ENCODE measurements at regions of chr6 and their contacts with region 1.

Region 1: DNA sequence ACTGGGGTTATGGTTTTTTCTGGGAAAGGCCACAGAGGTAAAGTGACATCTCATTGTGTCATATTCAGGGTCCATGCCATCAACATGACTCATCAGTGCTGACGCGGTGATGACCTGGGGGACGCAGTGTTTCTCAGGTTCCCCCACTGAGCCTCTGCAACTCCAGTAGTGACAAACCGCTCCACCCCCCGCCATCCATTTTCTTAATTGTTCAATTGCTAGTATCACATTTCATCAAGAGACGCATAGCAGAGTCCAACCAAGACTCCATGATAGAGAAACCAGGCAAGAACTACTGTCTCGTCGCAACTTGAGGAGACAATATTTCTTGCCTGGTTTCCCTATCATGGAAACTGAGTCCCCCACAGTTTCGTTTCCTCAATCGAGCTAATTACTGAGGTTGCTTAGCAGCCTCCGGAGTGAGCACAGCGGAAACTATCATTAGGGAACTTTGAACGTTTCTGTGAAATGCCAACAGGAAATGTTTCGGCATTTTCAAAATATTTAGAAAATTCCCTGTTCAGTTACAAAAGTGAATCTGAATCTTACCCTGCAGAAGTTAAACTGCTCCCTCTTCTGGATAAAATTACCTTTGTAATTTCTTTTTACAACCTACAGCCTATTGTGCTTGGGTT is 12.2 kb upstream of the SERPINB1 start:
- DNase-seq: peak; percentile 87
- ATAC-seq: peak; percentile 57
- H3K4me3 Mint-ChIP-seq: peak overlapping the region; percentile 55
- H3K27ac Mint-ChIP-seq: peak overlapping the region; percentile 91
- H3K4me1 Mint-ChIP-seq: peaks cover 76% of the 10 kb centered on the region
- H3K27me3 Mint-ChIP-seq: no peaks in the 10 kb centered on the region

Region 2: DNA sequence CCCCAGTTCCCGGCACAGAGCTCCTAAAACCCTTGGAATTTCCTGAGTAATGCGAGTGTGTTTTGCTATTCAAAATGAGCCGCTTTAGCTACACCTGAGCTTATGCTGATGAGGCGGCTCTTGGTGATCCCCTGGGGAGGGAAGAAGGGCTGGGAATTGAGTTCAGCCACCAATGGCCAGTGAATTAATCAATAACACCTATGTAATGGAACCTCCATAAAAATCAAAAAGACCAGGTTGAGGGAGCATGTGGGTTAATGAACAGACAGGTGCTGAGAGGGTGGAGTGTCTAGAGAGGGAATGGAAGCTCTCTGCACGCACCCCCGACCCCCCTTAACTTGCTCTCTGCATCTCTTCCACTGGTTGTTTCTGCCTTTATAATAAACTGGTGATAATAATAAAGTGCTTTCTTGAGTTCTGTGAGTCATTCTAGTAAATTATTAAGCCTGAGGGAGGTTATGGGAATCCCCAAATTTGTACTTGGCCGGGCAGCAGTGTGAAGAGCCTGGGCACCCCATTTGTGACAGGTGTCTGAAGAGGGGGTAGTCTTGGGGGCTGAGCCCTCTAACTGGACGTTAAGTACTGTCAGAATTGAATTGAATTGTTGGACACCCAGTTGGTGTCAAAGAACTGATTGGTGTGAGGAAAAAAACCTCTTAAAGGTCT is 12.4 kb after region 1 on chr6:
- CTCF ChIA-PET with region 1: interaction called, 13 read pairs
- POLR2A ChIA-PET with region 1: interaction called, 31 read pairs
- DNase-seq: no peak
- ATAC-seq: no peak
- H3K4me3 Mint-ChIP-seq: no peak overlapping the region
- H3K27ac Mint-ChIP-seq: no peak overlapping the region
- H3K4me1 Mint-ChIP-seq: peaks cover 60% of the 10 kb centered on the region
- H3K27me3 Mint-ChIP-seq: no peaks in the 10 kb centered on the region

Region 3: GRCh38 chr6:2876210-2877056 is 22.6 kb after region 1 on chr6:
- CTCF ChIA-PET with region 1: interaction called, 24 read pairs
- POLR2A ChIA-PET with region 1: interaction called, 17 read pairs
- DNase-seq: peak; percentile 35
- ATAC-seq: peak; percentile 25
- H3K4me3 Mint-ChIP-seq: peak overlapping the region; percentile 74
- H3K27ac Mint-ChIP-seq: peak overlapping the region; percentile 86
- H3K4me1 Mint-ChIP-seq: peaks cover 72% of the 10 kb centered on the region
- H3K27me3 Mint-ChIP-seq: no peaks in the 10 kb centered on the region

Region 4: GRCh38 chr6:2900821-2901644 is 47.2 kb after region 1 on chr6:
- CTCF ChIA-PET with region 1: interaction called, 7 read pairs
- POLR2A ChIA-PET with region 1: interaction called, 19 read pairs
- DNase-seq: peak; percentile 21
- ATAC-seq: no peak
- H3K4me3 Mint-ChIP-seq: peak overlapping the region; percentile 94
- H3K27ac Mint-ChIP-seq: peak overlapping the region; percentile 62
- H3K4me1 Mint-ChIP-seq: peaks cover 53% of the 10 kb centered on the region
- H3K27me3 Mint-ChIP-seq: no peaks in the 10 kb centered on the region

Region 5: GRCh38 chr6:2911171-2911570 is 57.3 kb after region 1 on chr6:
- CTCF ChIA-PET with region 1: interaction called, 29 read pairs
- POLR2A ChIA-PET with region 1: interaction called, 3 read pairs
- DNase-seq: no peak
- ATAC-seq: no peak
- H3K4me3 Mint-ChIP-seq: no peak overlapping the region
- H3K27ac Mint-ChIP-seq: no peak overlapping the region
- H3K4me1 Mint-ChIP-seq: peaks cover 41% of the 10 kb centered on the region
- H3K27me3 Mint-ChIP-seq: no peaks in the 10 kb centered on the region

Region 6: GRCh38 chr6:2931970-2932748 is 78.3 kb after region 1 on chr6:
- CTCF ChIA-PET with region 1: interaction called, 267 read pairs
- POLR2A ChIA-PET with region 1: interaction called, 15 read pairs
- DNase-seq: peak; percentile 91
- ATAC-seq: peak; percentile 91
- H3K4me3 Mint-ChIP-seq: no peak overlapping the region
- H3K27ac Mint-ChIP-seq: no peak overlapping the region
- H3K4me1 Mint-ChIP-seq: peaks cover 22% of the 10 kb centered on the region
- H3K27me3 Mint-ChIP-seq: no peaks in the 10 kb centered on the region

Region 7: GRCh38 chr6:2940010-2940850 is 86.4 kb after region 1 on chr6:
- CTCF ChIA-PET with region 1: interaction called, 267 read pairs
- POLR2A ChIA-PET with region 1: interaction called, 32 read pairs
- DNase-seq: peak; percentile 87
- ATAC-seq: peak; percentile 85
- H3K4me3 Mint-ChIP-seq: peak overlapping the region; percentile 74
- H3K27ac Mint-ChIP-seq: peak overlapping the region; percentile 94
- H3K4me1 Mint-ChIP-seq: peaks cover 68% of the 10 kb centered on the region
- H3K27me3 Mint-ChIP-seq: no peaks in the 10 kb centered on the region